ENCODE measurements at regions of chr1 and their contacts with region 1.

Region 1: DNA sequence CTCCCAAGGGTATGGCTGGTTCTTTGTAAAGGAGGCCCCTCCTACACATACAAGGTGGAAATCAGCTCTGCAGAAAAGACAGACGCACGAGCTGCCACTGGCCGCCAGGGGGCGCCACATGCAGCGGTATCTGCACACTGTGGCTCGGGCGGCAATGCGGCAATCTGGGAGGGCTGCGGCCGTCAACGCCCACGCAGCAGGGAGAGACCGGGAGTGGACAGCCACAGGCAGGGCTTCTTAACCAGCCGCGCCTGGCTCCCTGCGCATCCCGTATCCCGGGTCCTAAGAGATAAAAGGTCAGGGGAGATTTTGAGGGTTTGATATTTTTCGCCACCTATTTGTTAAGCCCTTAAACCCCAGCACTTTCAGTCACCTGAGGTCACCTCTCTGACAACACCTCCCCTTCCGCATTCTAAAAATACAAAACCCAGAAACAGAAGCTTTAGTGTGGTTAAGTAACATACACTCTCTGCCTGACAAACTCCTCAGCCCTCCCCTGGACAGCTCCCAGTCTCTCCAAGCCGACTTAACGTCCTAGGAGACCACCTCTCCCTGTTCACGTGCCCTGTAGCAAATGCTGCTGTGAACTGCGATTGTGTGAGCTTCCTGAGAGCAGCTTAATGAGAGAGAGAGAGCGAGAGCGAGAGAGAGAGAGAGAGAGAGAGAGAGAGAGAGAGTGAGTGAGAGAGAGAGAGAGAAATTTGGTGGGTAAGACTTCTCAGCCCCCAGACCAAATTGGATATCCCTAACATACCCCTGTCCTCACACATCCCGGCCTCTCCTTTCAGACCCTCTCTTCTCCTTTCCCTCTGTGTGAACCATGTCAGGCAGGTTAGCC is 13.5 kb upstream of the KCNA2 start:
- DNase-seq: peak; percentile 60
- H3K4me3 ChIP-seq: no peak overlapping the region
- H3K27ac ChIP-seq: no peak overlapping the region
- H3K4me1 ChIP-seq: no peaks in the 10 kb centered on the region
- H3K27me3 ChIP-seq: peaks cover 9 to 15% of the 10 kb centered on the region in 2 experiments
- CTCF ChIP-seq: peak; percentile 92 to 98
- POLR2A ChIP-seq: no peak

Region 2: GRCh38 chr1:110356405-110356804 is 263.2 kb before region 1 on chr1:
- CTCF ChIA-PET with region 1: no interaction called
- POLR2A ChIA-PET with region 1: no interaction called
- dilution Hi-C with region 1: no loop called
- intact Hi-C with region 1: no loop called
- DNase-seq: no peak
- H3K4me3 ChIP-seq: no peak overlapping the region
- H3K27ac ChIP-seq: no peak overlapping the region
- H3K4me1 ChIP-seq: no peaks in the 10 kb centered on the region
- H3K27me3 ChIP-seq: no peaks in the 10 kb centered on the region
- CTCF ChIP-seq: no peak
- POLR2A ChIP-seq: no peak

Region 3: GRCh38 chr1:110554871-110555801 is 64.5 kb before region 1 on chr1:
- CTCF ChIA-PET with region 1: interaction called, 10 read pairs
- POLR2A ChIA-PET with region 1: no interaction called
- dilution Hi-C with region 1: no loop called
- intact Hi-C with region 1: loop called (anchors 1 kb)
- DNase-seq: peak; percentile 30
- H3K4me3 ChIP-seq: no peak overlapping the region
- H3K27ac ChIP-seq: no peak overlapping the region
- H3K4me1 ChIP-seq: no peaks in the 10 kb centered on the region
- H3K27me3 ChIP-seq: peaks cover 13 to 22% of the 10 kb centered on the region in 2 experiments
- CTCF ChIP-seq: peak; percentile 51 to 80
- POLR2A ChIP-seq: no peak

Region 4: GRCh38 chr1:110605901-110606656 is 13.6 kb before region 1 on chr1 and contains the start of gene KCNA2:
- CTCF ChIA-PET with region 1: interaction called, 18 read pairs
- POLR2A ChIA-PET with region 1: no interaction called
- dilution Hi-C with region 1: no loop called
- intact Hi-C with region 1: no loop called
- DNase-seq: peak; percentile 10
- H3K4me3 ChIP-seq: no peak within 1 kb of the TSS
- H3K27ac ChIP-seq: no peak within 1 kb of the TSS
- H3K4me1 ChIP-seq: no peaks in the 10 kb centered on the region
- H3K27me3 ChIP-seq: peaks cover 50 to 56% of the 10 kb centered on the region in 2 experiments
- CTCF ChIP-seq: peak in 1 of 2 donors; percentile 4
- POLR2A ChIP-seq: no peak
- total RNA-seq, gene KCNA2: not detected in 2 replicates

Region 5: GRCh38 chr1:110780600-110781484 is 161.2 kb after region 1 on chr1:
- CTCF ChIA-PET with region 1: interaction called, 70 read pairs
- POLR2A ChIA-PET with region 1: no interaction called
- dilution Hi-C with region 1: no loop called
- intact Hi-C with region 1: loop called (anchors 1 kb)
- DNase-seq: peak; percentile 82
- H3K4me3 ChIP-seq: no peak overlapping the region
- H3K27ac ChIP-seq: no peak overlapping the region
- H3K4me1 ChIP-seq: no peaks in the 10 kb centered on the region
- H3K27me3 ChIP-seq: no peaks in the 10 kb centered on the region
- CTCF ChIP-seq: peak; percentile 69 to 86
- POLR2A ChIP-seq: no peak